Common myeloid progenitor, CD34-positive (primary cell): ENCODE measurements at regions of chr16 and their contacts with region 1.

Region 1: DNA sequence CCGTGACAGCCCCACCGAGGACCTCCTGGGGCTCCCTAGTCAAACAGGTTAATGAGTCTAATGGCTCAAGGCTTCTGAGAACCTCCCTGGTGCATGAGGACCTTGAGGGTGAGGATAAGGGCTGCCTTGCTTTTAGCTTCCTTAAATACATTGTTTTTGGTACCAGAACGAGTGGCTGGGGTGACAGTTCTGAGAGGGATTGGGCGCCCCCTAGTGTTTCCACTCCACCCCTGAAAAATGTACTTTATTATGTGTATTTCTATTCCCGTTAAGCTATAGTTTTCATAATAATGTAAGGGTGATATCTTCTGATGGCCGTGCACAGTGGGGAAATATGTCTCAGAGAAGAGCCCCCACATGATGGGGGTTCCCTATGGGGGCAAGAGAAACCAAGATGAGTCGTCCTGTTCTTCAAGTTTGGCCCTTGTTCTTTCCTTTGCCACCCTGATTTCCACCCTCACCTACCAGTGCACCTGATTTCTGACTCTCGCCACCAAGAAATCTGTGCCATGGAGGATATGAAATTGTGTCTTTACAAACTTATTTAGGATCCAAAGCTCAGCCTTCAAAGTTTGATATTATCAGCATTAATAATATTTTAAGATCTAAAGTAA is 14.5 kb upstream of the VWA3A start:
- DNase-seq: peak; percentile 72 to 87 (median 84)
- H3K4me3 ChIP-seq: no peak overlapping the region
- H3K27ac ChIP-seq: no peak overlapping the region
- H3K4me1 ChIP-seq: no peaks in the 10 kb centered on the region
- H3K27me3 ChIP-seq: no peaks in the 10 kb centered on the region

Region 2: DNA sequence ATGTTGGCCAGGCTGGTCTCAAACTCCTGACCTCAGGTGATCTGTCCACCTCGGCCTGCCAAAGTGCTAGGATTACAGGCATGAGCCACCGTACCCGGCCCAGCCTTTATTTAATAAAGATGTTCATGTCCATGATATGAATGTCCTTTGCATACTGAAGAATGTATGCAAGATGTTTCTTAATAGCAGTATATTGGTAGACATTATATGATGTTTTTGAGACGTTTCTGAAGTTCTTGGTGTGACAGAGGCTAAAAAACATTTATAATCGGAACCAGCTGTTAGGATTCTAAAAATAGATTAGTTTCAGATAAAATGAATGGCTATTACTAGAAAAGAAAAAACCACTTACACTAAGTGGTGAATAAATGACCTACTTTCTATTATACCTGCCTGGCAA is 88.7 kb before region 1 on chr16:
- CTCF ChIA-PET with region 1: interaction called, 15 read pairs
- POLR2A ChIA-PET with region 1: interaction called, 4 read pairs
- DNase-seq: no peak
- H3K4me3 ChIP-seq: no peak overlapping the region
- H3K27ac ChIP-seq: no peak overlapping the region
- H3K4me1 ChIP-seq: no peaks in the 10 kb centered on the region
- H3K27me3 ChIP-seq: no peaks in the 10 kb centered on the region

Region 3: DNA sequence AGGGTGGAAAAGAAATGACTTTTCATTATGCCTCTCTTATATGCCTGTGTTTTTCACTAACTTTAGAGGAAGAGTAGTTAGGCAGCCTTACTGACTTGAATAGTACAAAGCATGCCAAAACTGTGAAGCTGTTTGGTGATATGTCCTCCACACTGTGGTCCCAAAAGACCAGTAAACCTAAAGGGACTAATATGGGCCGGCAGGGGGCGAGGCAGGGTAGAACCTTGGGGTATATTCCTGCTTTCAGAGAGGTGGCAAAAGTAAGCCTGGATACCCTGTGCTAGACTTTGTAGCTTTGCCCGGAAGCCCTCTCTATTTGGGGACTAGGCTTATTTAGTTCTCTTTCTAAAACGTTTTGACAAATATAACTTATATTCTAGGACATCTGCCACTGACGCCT is 21.9 kb before region 1 on chr16:
- CTCF ChIA-PET with region 1: interaction called, 30 read pairs
- POLR2A ChIA-PET with region 1: no interaction called
- DNase-seq: no peak
- H3K4me3 ChIP-seq: no peak overlapping the region
- H3K27ac ChIP-seq: no peak overlapping the region
- H3K4me1 ChIP-seq: peaks cover 6 to 18% (median 7%) of the 10 kb centered on the region in 4 experiments
- H3K27me3 ChIP-seq: no peaks in the 10 kb centered on the region

Region 4: DNA sequence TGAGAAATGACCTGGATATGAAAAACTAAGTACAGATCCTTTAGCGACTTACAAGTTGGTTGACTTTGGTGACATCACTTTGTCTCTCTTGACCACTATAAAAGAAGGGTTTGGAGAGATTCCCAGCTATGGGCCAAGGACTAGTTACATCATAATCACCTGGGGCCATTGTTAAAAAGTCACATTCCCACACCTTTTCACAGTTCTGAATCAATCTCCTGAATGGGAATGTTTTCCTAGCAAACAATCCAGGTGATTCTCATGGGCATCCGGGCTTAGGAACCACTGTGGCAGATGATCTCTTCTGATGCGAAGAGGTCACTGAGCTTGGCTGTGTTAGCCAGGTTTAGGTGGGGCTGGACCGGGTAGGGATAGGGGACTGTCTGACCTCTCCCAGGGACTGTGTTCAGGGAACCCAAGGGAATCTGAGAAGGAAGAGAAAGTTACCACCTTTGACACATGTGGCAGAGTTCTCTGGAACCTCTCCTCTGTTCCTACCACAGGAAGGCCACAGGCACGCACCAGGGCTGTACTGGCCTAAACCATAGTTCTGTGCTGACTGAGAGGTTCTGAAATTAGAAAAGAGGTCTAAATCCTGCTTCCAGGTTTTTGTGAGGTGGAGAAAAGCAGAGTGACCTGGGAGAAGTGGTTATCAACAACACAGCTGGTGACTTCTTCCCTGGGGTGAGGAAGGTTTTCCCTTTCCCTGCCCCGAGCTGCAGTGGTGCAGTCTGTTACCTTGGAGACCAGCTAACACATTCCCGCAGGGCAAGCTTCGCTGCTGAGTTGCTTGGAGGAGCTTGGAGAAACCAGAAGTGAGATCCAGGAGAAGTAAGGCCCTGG is 14.2 kb after region 1 on chr16 and contains the start of gene VWA3A:
- CTCF ChIA-PET with region 1: interaction called, 35 read pairs
- POLR2A ChIA-PET with region 1: no interaction called
- DNase-seq: no peak
- H3K4me3 ChIP-seq: no peak within 1 kb of the TSS
- H3K27ac ChIP-seq: no peak within 1 kb of the TSS
- H3K4me1 ChIP-seq: no peaks in the 10 kb centered on the region
- H3K27me3 ChIP-seq: no peaks in the 10 kb centered on the region

Region 5: GRCh38 chr16:22126103-22126502 is 48.3 kb after region 1 on chr16:
- CTCF ChIA-PET with region 1: no interaction called
- POLR2A ChIA-PET with region 1: no interaction called
- DNase-seq: no peak
- H3K4me3 ChIP-seq: no peak overlapping the region
- H3K27ac ChIP-seq: no peak overlapping the region
- H3K4me1 ChIP-seq: peaks cover 0 to 4% (median 0%) of the 10 kb centered on the region in 4 experiments
- H3K27me3 ChIP-seq: peaks cover 0 to 2% (median 0%) of the 10 kb centered on the region in 5 experiments

Region 6: DNA sequence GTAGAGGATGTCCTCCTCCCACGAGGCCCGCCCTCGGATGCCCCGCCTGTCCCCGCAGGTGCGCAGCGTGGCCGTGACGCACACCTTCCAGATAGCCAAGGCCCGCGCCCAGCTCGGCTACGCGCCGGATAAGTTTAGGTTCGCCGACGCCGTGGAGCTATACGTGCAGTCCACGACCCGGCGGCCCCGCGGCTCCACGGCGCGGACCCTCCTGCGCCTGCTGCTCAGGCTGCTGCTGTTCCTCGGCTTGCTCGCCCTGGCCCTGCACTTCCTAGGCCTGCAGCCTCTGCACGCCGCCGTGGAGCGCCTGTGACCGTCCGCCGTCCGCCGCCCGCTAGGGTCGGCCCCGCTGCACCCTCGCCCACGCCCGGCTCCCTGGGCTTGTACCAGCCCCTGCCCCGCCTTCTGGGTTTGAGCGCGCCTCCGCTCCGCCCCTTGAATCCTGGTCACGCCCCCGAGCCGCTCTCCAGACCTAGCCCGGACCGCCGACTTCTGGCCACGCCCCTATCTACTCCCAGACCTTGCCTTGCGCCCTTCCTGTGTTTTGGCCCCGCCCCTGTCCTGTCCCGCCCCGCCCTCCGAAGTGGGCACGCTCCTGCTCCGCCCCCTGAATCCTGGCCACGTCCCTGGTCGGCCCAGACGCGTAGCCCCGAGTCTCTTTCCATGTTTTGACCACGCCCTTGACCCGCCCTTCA is 112.4 kb after region 1 on chr16:
- CTCF ChIA-PET with region 1: interaction called, 30 read pairs
- POLR2A ChIA-PET with region 1: no interaction called
- DNase-seq: peak; percentile 99
- H3K4me3 ChIP-seq: peak overlapping the region; percentile 49 to 88 (median 81)
- H3K27ac ChIP-seq: peak overlapping the region; percentile 35 to 65
- H3K4me1 ChIP-seq: peaks cover 23 to 54% (median 43%) of the 10 kb centered on the region in 4 experiments
- H3K27me3 ChIP-seq: no peaks in the 10 kb centered on the region